Activated CD4-positive, alpha-beta T cell treated with anti-CD3 and anti-CD28 coated beads for 36 hours (primary cell): ENCODE measurements at regions of chr5 and their contacts with region 1.

Region 1: DNA sequence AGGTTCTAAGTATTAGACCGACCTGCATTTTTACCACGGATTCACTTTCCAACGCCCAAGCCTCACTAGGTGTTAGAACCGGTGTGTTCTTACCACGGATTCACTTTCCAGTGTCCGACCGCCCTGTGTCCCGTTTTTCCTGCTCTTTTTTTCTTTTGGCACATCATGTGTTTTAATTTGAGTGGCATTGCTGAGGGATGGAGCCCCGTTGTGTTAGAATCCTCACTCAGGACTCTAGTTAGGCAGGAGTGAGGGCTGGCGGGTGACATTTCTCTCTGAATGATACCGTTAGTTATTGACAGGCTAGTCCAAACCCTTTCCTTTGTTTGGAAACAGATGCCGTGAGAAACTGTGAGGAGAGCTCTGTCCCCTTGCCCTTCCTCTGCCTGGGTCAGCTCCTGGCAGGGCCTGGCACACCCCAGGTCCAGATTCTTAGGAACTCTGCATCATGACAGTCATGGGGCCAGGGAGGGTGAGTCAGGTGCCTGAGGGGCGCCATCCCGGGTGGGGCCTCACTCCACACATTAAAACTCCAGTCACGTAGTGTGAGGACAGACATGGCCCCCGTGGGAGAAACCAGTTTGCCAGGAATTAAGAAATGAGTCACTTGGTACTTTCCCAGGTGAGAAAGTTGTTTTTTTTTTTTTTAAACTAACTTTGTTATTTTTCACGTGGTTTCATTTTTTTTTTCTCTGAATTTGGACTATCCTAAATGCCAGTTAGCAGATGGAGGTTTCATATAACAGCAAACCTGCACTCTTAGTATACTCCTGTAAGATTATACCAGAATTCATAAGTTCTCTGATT is 15.8 kb downstream of the EXOC3 start:
- DNase-seq: peak; percentile 84
- ATAC-seq: peak; percentile 92
- H3K4me3 Mint-ChIP-seq: peak overlapping the region; percentile 40
- H3K27ac Mint-ChIP-seq: peak overlapping the region; percentile 97
- H3K4me1 Mint-ChIP-seq: peaks cover 72% of the 10 kb centered on the region
- H3K27me3 Mint-ChIP-seq: no peaks in the 10 kb centered on the region

Region 2: GRCh38 chr5:378976-379742 is 79.6 kb before region 1 on chr5:
- CTCF ChIA-PET with region 1: no interaction called
- POLR2A ChIA-PET with region 1: interaction called, 3 read pairs
- intact Hi-C with region 1: loop called in 1 of 2 experiments (anchors 1 kb)
- DNase-seq: peak; percentile 30
- ATAC-seq: peak; percentile 60
- H3K4me3 Mint-ChIP-seq: peak overlapping the region; percentile 55
- H3K27ac Mint-ChIP-seq: peak overlapping the region; percentile 94
- H3K4me1 Mint-ChIP-seq: peaks cover 68% of the 10 kb centered on the region
- H3K27me3 Mint-ChIP-seq: no peaks in the 10 kb centered on the region